ENCODE measurements at regions of chr9 and their contacts with region 1.

Region 1: DNA sequence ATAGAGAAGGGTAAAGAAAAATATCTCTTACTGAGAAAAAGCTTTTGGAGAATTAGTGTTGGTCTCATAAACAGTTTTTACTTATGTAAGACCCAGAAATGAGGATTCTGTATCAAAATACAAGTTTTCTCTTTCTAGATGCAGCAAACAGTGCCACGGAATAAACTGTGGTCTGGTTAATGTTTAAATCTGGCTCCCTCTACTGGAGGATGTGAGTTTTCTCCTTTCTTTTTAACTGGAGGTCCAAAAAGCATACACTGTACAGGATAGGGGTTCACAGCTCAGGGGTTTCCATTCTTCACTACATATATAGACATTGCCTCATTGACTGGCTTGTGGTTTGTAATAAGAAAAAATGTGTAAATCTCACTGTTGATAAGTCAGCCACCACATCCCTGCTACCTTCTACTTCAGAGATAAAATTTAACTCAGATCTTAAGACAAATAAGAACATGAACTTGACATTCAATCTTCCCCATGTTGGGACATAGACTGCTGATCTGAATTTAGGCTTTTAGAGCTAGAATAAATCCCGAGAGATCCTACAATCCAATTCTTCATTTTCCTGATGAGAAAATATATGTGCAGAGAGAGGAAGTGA is 98.9 kb downstream of the CFAP95 start:
- DNase-seq: peak in 4 of 5 donors; percentile 21 to 43 (median 28)
- H3K4me3 ChIP-seq: no peak overlapping the region
- H3K4me3 Mint-ChIP-seq: no peak overlapping the region
- H3K27ac ChIP-seq: no peak overlapping the region
- H3K27ac Mint-ChIP-seq: no peak overlapping the region
- H3K4me1 ChIP-seq: no peaks in the 10 kb centered on the region
- H3K4me1 Mint-ChIP-seq: no peaks in the 10 kb centered on the region
- H3K27me3 ChIP-seq: no peaks in the 10 kb centered on the region
- H3K27me3 Mint-ChIP-seq: peaks cover 2 to 10% of the 10 kb centered on the region in 2 donors

Region 2: DNA sequence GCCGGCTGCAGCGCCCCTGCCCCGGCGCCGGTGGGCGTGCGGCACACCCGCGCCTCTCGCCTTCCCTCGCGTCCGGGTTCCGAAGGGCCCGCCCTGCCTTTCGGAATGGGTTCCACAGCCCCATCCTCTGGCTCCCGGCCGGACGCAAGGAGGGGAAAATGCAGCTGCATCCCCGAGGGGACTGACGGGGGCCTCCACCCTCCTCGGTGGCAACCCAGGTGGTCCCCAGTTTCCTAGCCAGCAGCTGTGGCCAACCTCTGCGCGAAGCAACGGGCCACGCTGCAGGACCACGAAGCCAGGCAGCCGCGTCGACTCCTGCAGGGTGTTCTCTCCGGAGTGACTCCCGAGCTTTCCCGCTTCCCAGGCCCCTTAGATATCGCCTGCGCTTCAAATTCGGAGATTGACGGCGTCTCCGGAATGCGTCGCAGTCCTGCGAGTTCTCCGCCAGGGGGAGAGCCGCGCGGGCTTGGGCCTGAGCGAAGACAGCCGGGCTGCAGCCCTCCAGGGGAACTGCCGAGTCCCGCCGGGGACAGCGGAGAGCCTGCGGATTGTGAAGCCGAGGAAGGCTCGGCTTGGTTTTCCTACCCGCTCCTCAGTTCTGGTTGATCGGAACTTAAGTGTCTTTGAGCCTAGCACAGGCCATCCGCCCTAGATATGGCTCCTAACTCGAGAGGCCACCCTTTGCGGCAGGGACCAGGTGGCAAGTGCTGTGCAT is 246.8 kb before region 1 on chr9:
- CTCF ChIA-PET with region 1: interaction called, 8 read pairs
- POLR2A ChIA-PET with region 1: no interaction called
- intact Hi-C with region 1: loop called (anchors 1 kb)
- DNase-seq: peak; percentile 55 to 70 (median 63)
- H3K4me3 ChIP-seq: peak overlapping the region in 1 of 2 donors; percentile 74
- H3K4me3 Mint-ChIP-seq: peak overlapping the region; percentile 80 to 88 (median 82)
- H3K27ac ChIP-seq: no peak overlapping the region
- H3K27ac Mint-ChIP-seq: peak overlapping the region in 2 of 7 donors; percentile 49 to 75
- H3K4me1 ChIP-seq: peaks cover 12% of the 10 kb centered on the region
- H3K4me1 Mint-ChIP-seq: peaks cover 12 to 29% (median 18%) of the 10 kb centered on the region in 4 donors
- H3K27me3 ChIP-seq: peaks cover 6% of the 10 kb centered on the region
- H3K27me3 Mint-ChIP-seq: peaks cover 12 to 22% of the 10 kb centered on the region in 2 donors

Region 3: GRCh38 chr9:69898714-69899209 is 20.8 kb before region 1 on chr9:
- CTCF ChIA-PET with region 1: interaction called, 10 read pairs
- POLR2A ChIA-PET with region 1: no interaction called
- intact Hi-C with region 1: no loop called
- DNase-seq: no peak
- H3K4me3 ChIP-seq: no peak overlapping the region
- H3K4me3 Mint-ChIP-seq: no peak overlapping the region
- H3K27ac ChIP-seq: no peak overlapping the region
- H3K27ac Mint-ChIP-seq: no peak overlapping the region
- H3K4me1 ChIP-seq: no peaks in the 10 kb centered on the region
- H3K4me1 Mint-ChIP-seq: peaks cover 0 to 1% (median 0%) of the 10 kb centered on the region in 4 donors
- H3K27me3 ChIP-seq: no peaks in the 10 kb centered on the region
- H3K27me3 Mint-ChIP-seq: no peaks in the 10 kb centered on the region

Region 4: GRCh38 chr9:69932901-69933300 is 13.3 kb after region 1 on chr9:
- CTCF ChIA-PET with region 1: interaction called, 16 read pairs
- POLR2A ChIA-PET with region 1: no interaction called
- intact Hi-C with region 1: no loop called
- DNase-seq: no peak
- H3K4me3 ChIP-seq: no peak overlapping the region
- H3K4me3 Mint-ChIP-seq: no peak overlapping the region
- H3K27ac ChIP-seq: no peak overlapping the region
- H3K27ac Mint-ChIP-seq: no peak overlapping the region
- H3K4me1 ChIP-seq: no peaks in the 10 kb centered on the region
- H3K4me1 Mint-ChIP-seq: no peaks in the 10 kb centered on the region
- H3K27me3 ChIP-seq: no peaks in the 10 kb centered on the region
- H3K27me3 Mint-ChIP-seq: peaks cover 6 to 11% of the 10 kb centered on the region in 2 donors